ENCODE measurements at regions of chr16 and their contacts with region 1.

Region 1: GRCh38 chr16:14196539-14196938 is 125.4 kb downstream of the MRTFB start:
- DNase-seq: peak; percentile 12
- H3K4me3 ChIP-seq: no peak overlapping the region
- H3K27ac ChIP-seq: peak overlapping the region in 1 of 2 experiments; percentile 35; a peak in 1 of 4 replicates
- H3K4me1 ChIP-seq: peaks cover 0 to 9% of the 10 kb centered on the region in 2 experiments; a peak in 3 of 4 replicates
- H3K27me3 ChIP-seq: no peaks in the 10 kb centered on the region
- CTCF ChIP-seq: no peak
- EP300 ChIP-seq: no peak
- RAD21 ChIP-seq: no peak

Region 2: GRCh38 chr16:14186007-14186794 is 10.3 kb before region 1 on chr16:
- CTCF ChIA-PET with region 1: interaction called, 13 read pairs
- POLR2A ChIA-PET with region 1: no interaction called
- DNase-seq: peak; percentile 59
- H3K4me3 ChIP-seq: peak overlapping the region; percentile 42 to 51
- H3K27ac ChIP-seq: peak overlapping the region; percentile 63 to 77
- H3K4me1 ChIP-seq: peaks cover 0 to 18% of the 10 kb centered on the region in 2 experiments; a peak in 3 of 4 replicates
- H3K27me3 ChIP-seq: no peaks in the 10 kb centered on the region
- CTCF ChIP-seq: peak; percentile 62
- EP300 ChIP-seq: no peak
- RAD21 ChIP-seq: peak; percentile 34; the same call in 1 of the 2 replicates